ENCODE measurements at regions of chr14 and their contacts with region 1.

Region 1: GRCh38 chr14:50060871-50061663 is 55.3 kb downstream of the VCPKMT start:
- DNase-seq: peak in 6 of 14 experiments; percentile 17 to 79 (median 57)
- ATAC-seq: no peak
- H3K4me3 ChIP-seq: peak overlapping the region; percentile 48
- H3K4me3 Mint-ChIP-seq: peak overlapping the region; percentile 70
- H3K27ac ChIP-seq: peak overlapping the region; percentile 89 to 94
- H3K27ac Mint-ChIP-seq: peak overlapping the region; percentile 91
- H3K4me1 ChIP-seq: peaks cover 73% of the 10 kb centered on the region
- H3K4me1 Mint-ChIP-seq: peaks cover 73% of the 10 kb centered on the region
- H3K27me3 ChIP-seq: no peaks in the 10 kb centered on the region
- H3K27me3 Mint-ChIP-seq: no peaks in the 10 kb centered on the region
- CTCF ChIP-seq: no peak

Region 2: GRCh38 chr14:49767562-49768300 is 293.3 kb before region 1 on chr14 and contains the start of gene KLHDC2:
- CTCF ChIA-PET with region 1: no interaction called
- POLR2A ChIA-PET with region 1: interaction called, 10 read pairs
- intact Hi-C with region 1: no loop called
- DNase-seq: peak; percentile 78 to 95 (median 87)
- ATAC-seq: peak; percentile 65
- H3K4me3 ChIP-seq: peak within 1 kb of the TSS; percentile 96
- H3K4me3 Mint-ChIP-seq: peak within 1 kb of the TSS; percentile 100
- H3K27ac ChIP-seq: peak within 1 kb of the TSS; percentile 93 to 95
- H3K27ac Mint-ChIP-seq: peak within 1 kb of the TSS; percentile 99
- H3K4me1 ChIP-seq: peaks cover 35% of the 10 kb centered on the region
- H3K4me1 Mint-ChIP-seq: peaks cover 45% of the 10 kb centered on the region
- H3K27me3 ChIP-seq: no peaks in the 10 kb centered on the region
- H3K27me3 Mint-ChIP-seq: no peaks in the 10 kb centered on the region
- CTCF ChIP-seq: no peak
- total RNA-seq, gene KLHDC2: 142 to 143 TPM

Region 3: GRCh38 chr14:49879683-49880204 is 181.3 kb before region 1 on chr14:
- CTCF ChIA-PET with region 1: interaction called, 15 read pairs
- POLR2A ChIA-PET with region 1: interaction called, 14 read pairs
- intact Hi-C with region 1: no loop called
- DNase-seq: peak; percentile 22 to 86 (median 38)
- ATAC-seq: peak; percentile 94
- H3K4me3 ChIP-seq: no peak overlapping the region
- H3K4me3 Mint-ChIP-seq: no peak overlapping the region
- H3K27ac ChIP-seq: no peak overlapping the region
- H3K27ac Mint-ChIP-seq: peak overlapping the region; percentile 64
- H3K4me1 ChIP-seq: peaks cover 17% of the 10 kb centered on the region
- H3K4me1 Mint-ChIP-seq: peaks cover 18% of the 10 kb centered on the region
- H3K27me3 ChIP-seq: no peaks in the 10 kb centered on the region
- H3K27me3 Mint-ChIP-seq: no peaks in the 10 kb centered on the region
- CTCF ChIP-seq: peak; percentile 46

Region 4: GRCh38 chr14:49971156-49972130 is 89.6 kb before region 1 on chr14:
- CTCF ChIA-PET with region 1: interaction called, 7 read pairs
- POLR2A ChIA-PET with region 1: interaction called, 46 read pairs
- intact Hi-C with region 1: loop called in 1 of 2 experiments (anchors 2 kb)
- DNase-seq: peak in 13 of 14 experiments; percentile 16 to 87 (median 55)
- ATAC-seq: peak; percentile 84
- H3K4me3 ChIP-seq: peak overlapping the region; percentile 30
- H3K4me3 Mint-ChIP-seq: peak overlapping the region; percentile 50
- H3K27ac ChIP-seq: peak overlapping the region; percentile 80 to 85
- H3K27ac Mint-ChIP-seq: peak overlapping the region; percentile 90
- H3K4me1 ChIP-seq: peaks cover 66% of the 10 kb centered on the region
- H3K4me1 Mint-ChIP-seq: peaks cover 59% of the 10 kb centered on the region
- H3K27me3 ChIP-seq: no peaks in the 10 kb centered on the region
- H3K27me3 Mint-ChIP-seq: no peaks in the 10 kb centered on the region
- CTCF ChIP-seq: no peak

Region 5: GRCh38 chr14:50045039-50045711 is 15.9 kb before region 1 on chr14:
- CTCF ChIA-PET with region 1: interaction called, 7 read pairs
- POLR2A ChIA-PET with region 1: interaction called, 34 read pairs
- intact Hi-C with region 1: loop called in 1 of 2 experiments (anchors 2 kb)
- DNase-seq: peak; percentile 35 to 93 (median 72)
- ATAC-seq: peak; percentile 67
- H3K4me3 ChIP-seq: no peak overlapping the region
- H3K4me3 Mint-ChIP-seq: peak overlapping the region; percentile 43
- H3K27ac ChIP-seq: peak overlapping the region; percentile 48 to 78
- H3K27ac Mint-ChIP-seq: peak overlapping the region; percentile 89
- H3K4me1 ChIP-seq: peaks cover 72% of the 10 kb centered on the region
- H3K4me1 Mint-ChIP-seq: peaks cover 65% of the 10 kb centered on the region
- H3K27me3 ChIP-seq: no peaks in the 10 kb centered on the region
- H3K27me3 Mint-ChIP-seq: no peaks in the 10 kb centered on the region
- CTCF ChIP-seq: no peak

Region 6: GRCh38 chr14:50109342-50109741 is 48.3 kb after region 1 on chr14:
- CTCF ChIA-PET with region 1: interaction called, 9 read pairs
- POLR2A ChIA-PET with region 1: interaction called, 30 read pairs
- intact Hi-C with region 1: loop called in 1 of 2 experiments (anchors 2 kb)
- DNase-seq: no peak
- ATAC-seq: no peak
- H3K4me3 ChIP-seq: no peak overlapping the region
- H3K4me3 Mint-ChIP-seq: no peak overlapping the region
- H3K27ac ChIP-seq: no peak overlapping the region
- H3K27ac Mint-ChIP-seq: no peak overlapping the region
- H3K4me1 ChIP-seq: peaks cover under 1% of the 10 kb centered on the region
- H3K4me1 Mint-ChIP-seq: peaks cover 30% of the 10 kb centered on the region
- H3K27me3 ChIP-seq: no peaks in the 10 kb centered on the region
- H3K27me3 Mint-ChIP-seq: no peaks in the 10 kb centered on the region
- CTCF ChIP-seq: no peak

Region 7: GRCh38 chr14:50285861-50286260 is 224.8 kb after region 1 on chr14:
- CTCF ChIA-PET with region 1: no interaction called
- POLR2A ChIA-PET with region 1: no interaction called
- intact Hi-C with region 1: no loop called
- DNase-seq: no peak
- ATAC-seq: no peak
- H3K4me3 ChIP-seq: no peak overlapping the region
- H3K4me3 Mint-ChIP-seq: no peak overlapping the region
- H3K27ac ChIP-seq: no peak overlapping the region
- H3K27ac Mint-ChIP-seq: no peak overlapping the region
- H3K4me1 ChIP-seq: no peaks in the 10 kb centered on the region
- H3K4me1 Mint-ChIP-seq: no peaks in the 10 kb centered on the region
- H3K27me3 ChIP-seq: no peaks in the 10 kb centered on the region
- H3K27me3 Mint-ChIP-seq: no peaks in the 10 kb centered on the region
- CTCF ChIP-seq: no peak

Measured in CD4-positive, alpha-beta T cell (primary cell).